Uterus (tissue), 4 donors: ENCODE measurements at regions of chr10 and their contacts with region 1.

Region 1: GRCh38 chr10:73552819-73553715 is 38.1 kb downstream of the USP54 start:
- DNase-seq: no peak
- H3K4me3 ChIP-seq: no peak overlapping the region
- H3K27ac ChIP-seq: no peak overlapping the region
- H3K4me1 ChIP-seq: no peaks in the 10 kb centered on the region
- H3K27me3 ChIP-seq: no peaks in the 10 kb centered on the region
- CTCF ChIP-seq: no peak
- POLR2A ChIP-seq: no peak

Region 2: GRCh38 chr10:73480158-73480557 is 72.9 kb before region 1 on chr10:
- intact Hi-C with region 1: no loop called
- DNase-seq: no peak
- H3K4me3 ChIP-seq: no peak overlapping the region
- H3K27ac ChIP-seq: no peak overlapping the region
- H3K4me1 ChIP-seq: no peaks in the 10 kb centered on the region
- H3K27me3 ChIP-seq: no peaks in the 10 kb centered on the region
- CTCF ChIP-seq: no peak
- POLR2A ChIP-seq: no peak

Region 3: DNA sequence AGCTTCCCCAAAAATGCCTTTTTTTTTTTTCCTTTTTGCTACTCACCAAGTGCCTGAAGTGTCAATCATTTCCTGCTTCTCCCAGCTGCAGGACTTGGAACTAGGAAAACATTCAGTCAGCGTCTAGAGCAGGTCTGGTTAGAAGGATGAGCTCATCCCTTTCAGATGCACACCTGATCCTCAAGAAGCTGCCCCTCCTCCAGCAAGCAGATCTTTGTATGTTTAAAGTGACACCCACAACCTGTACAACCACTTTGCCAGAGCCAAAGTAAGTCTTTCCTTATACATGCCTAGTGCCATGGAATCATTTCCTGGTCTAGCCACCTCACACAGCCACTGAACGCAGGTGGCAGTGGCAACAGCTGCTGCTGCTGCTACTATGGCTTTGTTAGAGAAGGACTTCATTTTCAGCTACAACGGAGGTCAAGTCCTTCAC is 48.4 kb after region 1 on chr10:
- intact Hi-C with region 1: loop called (anchors 10 kb)
- DNase-seq: no peak
- H3K4me3 ChIP-seq: no peak overlapping the region
- H3K27ac ChIP-seq: no peak overlapping the region
- H3K4me1 ChIP-seq: no peaks in the 10 kb centered on the region
- H3K27me3 ChIP-seq: no peaks in the 10 kb centered on the region
- CTCF ChIP-seq: no peak
- POLR2A ChIP-seq: no peak